ENCODE measurements at regions of chr17 and their contacts with region 1.

Region 1: DNA sequence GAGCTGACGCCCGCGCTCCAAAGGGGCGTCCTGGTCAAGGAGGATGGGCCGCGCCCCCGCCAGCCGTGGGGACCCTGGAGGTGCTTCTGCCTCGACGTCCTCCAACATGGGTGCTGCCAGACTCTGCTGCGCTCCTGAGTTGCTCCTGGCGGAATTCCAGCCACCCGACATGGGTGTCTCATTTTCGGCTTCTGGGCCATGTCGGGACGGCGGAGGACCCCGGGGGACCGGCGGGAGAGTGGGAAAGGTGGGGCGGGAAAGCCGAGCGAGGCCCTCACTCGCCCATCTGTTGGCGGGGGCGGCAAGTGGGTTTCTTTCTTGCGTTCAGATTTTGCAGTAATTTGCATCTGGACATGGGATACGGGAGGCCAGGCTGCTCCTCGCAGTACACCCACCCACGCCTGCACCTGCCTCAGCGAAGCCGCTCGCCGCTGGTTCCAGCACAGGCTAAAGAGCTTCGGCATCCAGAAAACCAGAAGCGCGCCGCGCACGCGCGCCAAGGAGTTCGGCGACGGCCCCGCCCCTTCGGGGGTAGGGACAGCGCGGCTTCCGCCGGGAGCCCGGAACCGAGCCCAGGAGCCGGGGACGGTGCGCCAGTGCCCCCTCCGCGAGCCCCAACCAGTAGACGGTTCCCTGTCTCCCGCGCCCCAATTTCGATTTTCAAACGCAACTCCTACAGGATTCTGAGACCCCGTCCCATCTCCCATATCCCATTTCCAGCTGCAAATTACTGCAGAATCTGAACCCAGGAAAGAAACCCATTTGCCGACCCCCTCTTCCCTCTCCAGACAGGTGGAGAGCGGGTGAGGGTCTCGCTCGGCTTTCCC is at the start of gene ARMC7:
- DNase-seq: peak; percentile 97
- CTCF ChIP-seq: no peak

Region 2: DNA sequence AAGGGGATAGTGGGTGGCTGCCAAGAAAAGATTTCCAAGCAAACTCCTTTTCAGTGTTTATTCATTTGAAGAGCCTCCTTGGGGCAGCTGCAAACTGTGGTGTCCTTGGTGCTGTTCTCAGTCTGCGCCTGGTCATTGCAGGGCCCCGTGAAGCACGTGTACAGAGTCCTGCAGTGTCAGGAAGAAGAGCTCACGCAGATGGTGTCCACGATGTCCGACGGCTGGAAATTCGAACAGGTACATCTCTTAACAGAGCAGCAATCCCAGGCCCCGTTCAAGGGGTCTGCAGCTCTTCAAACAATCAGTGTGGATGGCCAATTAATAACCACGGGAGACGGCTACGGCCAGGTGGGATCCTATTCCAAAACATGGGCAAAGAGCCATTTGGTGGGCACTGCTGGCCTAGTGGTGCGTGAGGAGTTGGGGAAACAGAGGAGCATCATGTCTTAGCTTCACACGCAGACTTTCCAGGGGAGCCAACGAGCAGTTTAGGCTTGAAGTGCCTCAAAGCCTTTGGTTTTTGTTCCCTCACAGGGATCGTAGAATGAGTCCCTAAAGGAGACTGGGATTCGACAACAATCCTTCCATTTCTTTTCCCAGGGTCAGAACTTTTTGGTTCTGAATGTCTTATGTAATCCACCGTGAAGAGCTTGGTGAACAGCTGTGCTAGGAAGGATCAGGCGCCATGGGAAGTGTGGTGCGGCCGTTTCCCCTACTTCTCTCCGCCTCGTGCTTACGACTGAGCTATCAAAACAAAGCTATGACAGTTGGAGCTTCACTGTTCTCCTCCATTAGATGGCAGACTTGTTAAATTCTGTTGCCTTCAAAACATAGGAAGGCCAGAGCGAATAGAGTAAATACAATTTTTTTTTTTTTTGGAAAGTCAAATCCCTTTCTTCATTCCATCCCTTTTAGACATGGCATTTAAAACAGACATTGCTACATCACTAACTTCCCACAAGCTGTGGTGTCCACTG is 50.0 kb before region 1 on chr17:
- CTCF ChIA-PET with region 1: interaction called, 30 read pairs
- POLR2A ChIA-PET with region 1: no interaction called
- DNase-seq: no peak
- CTCF ChIP-seq: peak; percentile 41

Region 3: DNA sequence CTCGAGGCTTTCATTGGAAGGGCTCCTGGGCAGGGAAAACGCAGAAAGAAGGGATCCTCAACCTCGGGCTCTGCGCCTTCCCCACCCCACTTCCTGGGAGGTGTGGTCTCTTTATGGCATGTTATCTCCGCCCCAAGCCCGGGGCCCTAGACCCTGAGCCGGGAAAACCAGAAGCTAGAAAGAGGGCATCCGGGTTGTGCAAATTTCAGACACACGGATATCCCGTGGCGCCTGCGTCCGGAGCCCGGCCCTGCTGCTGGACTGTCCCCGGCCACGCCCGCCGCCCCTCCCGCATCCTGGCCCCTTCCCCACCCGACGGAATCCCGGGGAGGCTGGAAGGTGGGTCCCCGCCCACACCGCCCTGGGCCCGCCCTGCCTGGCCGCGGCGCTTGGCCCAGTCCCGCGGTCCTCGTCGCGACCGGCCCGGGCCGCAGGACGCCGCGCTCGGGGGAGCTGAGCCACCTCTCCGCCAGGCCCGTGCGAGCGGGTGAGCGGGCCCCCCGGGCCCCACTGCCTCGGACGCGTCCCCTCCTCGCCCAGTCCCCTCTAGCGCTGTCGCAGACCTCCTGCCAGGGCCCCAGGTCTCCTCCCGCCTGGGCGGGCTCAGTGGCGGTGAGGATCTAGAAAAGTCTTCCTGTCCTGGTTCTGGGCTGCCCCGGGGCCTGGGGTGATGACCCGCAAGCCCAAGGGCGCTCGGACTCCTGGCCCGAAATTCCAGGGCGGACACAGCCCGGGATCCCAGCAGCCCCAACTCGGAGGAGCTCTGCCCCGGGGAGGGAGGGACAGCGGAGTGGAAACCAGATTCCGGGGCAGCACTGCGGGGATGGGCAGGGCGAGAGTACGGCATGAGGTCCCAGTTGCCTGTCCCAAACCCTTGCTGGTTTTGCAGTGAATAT is 21.8 kb before region 1 on chr17 and contains the start of gene SLC16A5:
- CTCF ChIA-PET with region 1: interaction called, 36 read pairs
- POLR2A ChIA-PET with region 1: interaction called, 3 read pairs
- DNase-seq: peak; percentile 72
- CTCF ChIP-seq: no peak

Region 4: DNA sequence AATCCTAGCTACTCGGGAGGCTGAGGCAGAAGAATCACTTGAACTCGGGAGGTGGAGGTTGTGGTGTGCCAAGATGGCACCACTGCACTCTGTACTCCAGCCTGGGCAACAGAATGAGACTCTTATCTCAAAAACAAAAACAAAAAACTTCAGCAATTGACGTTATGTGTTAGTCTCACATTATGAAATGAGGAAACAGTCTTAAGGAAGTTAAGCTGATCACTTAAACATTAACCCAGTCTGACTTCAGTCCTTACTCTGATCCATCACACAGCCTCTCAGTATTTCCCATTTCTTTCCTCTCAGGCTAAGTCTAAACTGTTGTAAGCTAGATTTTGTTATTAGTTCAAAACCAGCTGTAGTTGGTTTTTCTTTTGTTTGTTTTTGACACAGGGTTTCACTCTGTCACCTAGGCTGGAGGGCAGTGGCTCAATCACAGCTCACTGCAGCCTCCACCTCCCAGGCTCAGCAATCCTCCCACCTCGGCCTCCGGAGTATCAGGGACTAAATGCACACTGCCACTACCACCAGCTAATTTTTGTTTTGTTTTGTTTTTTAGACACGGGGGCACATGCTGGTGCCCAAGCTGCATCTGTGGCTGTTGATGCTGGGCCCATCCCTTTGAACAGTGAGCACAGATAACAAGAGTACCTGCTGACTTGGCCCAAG is 38.4 kb after region 1 on chr17:
- CTCF ChIA-PET with region 1: interaction called, 23 read pairs
- POLR2A ChIA-PET with region 1: no interaction called
- DNase-seq: no peak
- CTCF ChIP-seq: no peak

Region 5: DNA sequence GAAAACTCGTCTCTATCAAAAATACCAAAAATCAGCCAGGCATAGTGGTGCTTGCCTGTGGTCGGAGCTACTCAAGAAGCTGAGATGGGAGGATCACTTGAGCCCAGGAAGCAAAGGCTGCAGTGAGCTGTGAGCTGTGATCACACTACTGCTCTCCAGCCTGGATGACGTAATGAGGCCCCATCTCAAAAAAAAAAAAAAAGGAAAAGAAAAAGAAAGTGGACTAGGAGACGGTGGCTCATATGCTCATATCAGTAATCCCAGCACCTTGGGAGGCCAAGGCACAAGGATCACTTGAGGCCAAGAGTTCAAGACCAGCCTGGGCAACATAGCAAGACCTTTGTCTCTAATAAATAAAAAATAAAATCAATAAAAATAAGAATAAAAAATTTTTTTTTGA is 82.0 kb after region 1 on chr17:
- CTCF ChIA-PET with region 1: interaction called, 18 read pairs
- POLR2A ChIA-PET with region 1: no interaction called
- DNase-seq: no peak
- CTCF ChIP-seq: no peak

Region 6: GRCh38 chr17:75271233-75271954 is 161.8 kb after region 1 on chr17:
- CTCF ChIA-PET with region 1: interaction called, 15 read pairs
- POLR2A ChIA-PET with region 1: no interaction called
- DNase-seq: peak; percentile 96
- CTCF ChIP-seq: peak; percentile 96

Measured in GM10248 (cell line).